PC-3 (cell line): ENCODE measurements at regions of chr1 and their contacts with region 1.

Region 1: GRCh38 chr1:150813058-150813707 is 5.1 kb upstream of the CTSK start:
- DNase-seq: peak; percentile 79
- ATAC-seq: peak; percentile 98
- H3K4me3 ChIP-seq: no peak overlapping the region
- H3K27ac ChIP-seq: no peak overlapping the region
- H3K4me1 ChIP-seq: no peaks in the 10 kb centered on the region
- H3K27me3 ChIP-seq: no peaks in the 10 kb centered on the region
- CTCF ChIP-seq: peak; percentile 96

Region 2: GRCh38 chr1:150561974-150562445 is 251.2 kb before region 1 on chr1:
- CTCF ChIA-PET with region 1: interaction called, 22 read pairs
- POLR2A ChIA-PET with region 1: no interaction called
- intact Hi-C with region 1: loop called (anchors 1 kb)
- DNase-seq: peak; percentile 91
- ATAC-seq: peak; percentile 68
- H3K4me3 ChIP-seq: peak overlapping the region; percentile 69
- H3K27ac ChIP-seq: peak overlapping the region; percentile 96
- H3K4me1 ChIP-seq: peaks cover 37% of the 10 kb centered on the region
- H3K27me3 ChIP-seq: no peaks in the 10 kb centered on the region
- CTCF ChIP-seq: no peak